Ovary (tissue), 10 donors: ENCODE measurements at regions of chr14 and their contacts with region 1.

Region 1: DNA sequence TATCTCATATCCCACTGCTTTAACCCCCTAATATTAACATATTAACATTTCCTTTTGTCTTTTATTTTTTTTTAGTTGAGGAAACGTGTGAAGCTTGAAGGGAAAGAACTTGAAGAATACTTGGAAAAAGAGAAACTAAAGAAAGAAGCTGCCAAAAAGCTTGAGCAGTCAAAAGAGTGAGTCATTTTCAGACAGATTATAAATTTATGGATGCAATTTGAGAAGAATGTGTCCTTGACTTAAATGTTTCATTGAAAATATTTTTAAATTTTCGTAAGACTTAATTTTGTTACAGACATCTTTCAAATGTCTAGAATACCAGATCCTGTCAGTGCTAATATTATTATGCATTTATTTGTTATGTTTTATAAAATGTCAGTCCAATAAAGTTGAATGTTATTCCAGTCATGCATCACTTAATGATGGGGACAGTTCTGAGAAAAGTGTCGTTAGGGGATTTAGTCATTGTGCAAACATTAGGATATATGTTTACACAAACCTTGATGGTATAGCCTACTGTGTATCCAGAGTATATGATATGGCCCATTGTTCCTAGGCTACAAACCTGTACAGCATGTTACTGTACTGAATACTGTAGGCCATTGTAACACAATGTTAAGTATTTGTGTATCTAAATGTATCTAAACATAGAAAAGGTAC is 32.6 kb downstream of the CPSF2 start:
- DNase-seq: no peak
- H3K4me3 ChIP-seq: no peak overlapping the region
- H3K27ac ChIP-seq: no peak overlapping the region
- H3K4me1 ChIP-seq: peaks cover 4% of the 10 kb centered on the region
- H3K27me3 ChIP-seq: no peaks in the 10 kb centered on the region
- CTCF ChIP-seq: no peak
- EP300 ChIP-seq: no peak
- POLR2A ChIP-seq: no peak

Region 2: GRCh38 chr14:92252323-92252722 is 97.9 kb after region 1 on chr14:
- intact Hi-C with region 1: no loop called
- DNase-seq: no peak
- H3K4me3 ChIP-seq: no peak overlapping the region
- H3K27ac ChIP-seq: no peak overlapping the region
- H3K4me1 ChIP-seq: no peaks in the 10 kb centered on the region
- H3K27me3 ChIP-seq: no peaks in the 10 kb centered on the region
- CTCF ChIP-seq: no peak
- EP300 ChIP-seq: no peak
- POLR2A ChIP-seq: no peak

Region 3: DNA sequence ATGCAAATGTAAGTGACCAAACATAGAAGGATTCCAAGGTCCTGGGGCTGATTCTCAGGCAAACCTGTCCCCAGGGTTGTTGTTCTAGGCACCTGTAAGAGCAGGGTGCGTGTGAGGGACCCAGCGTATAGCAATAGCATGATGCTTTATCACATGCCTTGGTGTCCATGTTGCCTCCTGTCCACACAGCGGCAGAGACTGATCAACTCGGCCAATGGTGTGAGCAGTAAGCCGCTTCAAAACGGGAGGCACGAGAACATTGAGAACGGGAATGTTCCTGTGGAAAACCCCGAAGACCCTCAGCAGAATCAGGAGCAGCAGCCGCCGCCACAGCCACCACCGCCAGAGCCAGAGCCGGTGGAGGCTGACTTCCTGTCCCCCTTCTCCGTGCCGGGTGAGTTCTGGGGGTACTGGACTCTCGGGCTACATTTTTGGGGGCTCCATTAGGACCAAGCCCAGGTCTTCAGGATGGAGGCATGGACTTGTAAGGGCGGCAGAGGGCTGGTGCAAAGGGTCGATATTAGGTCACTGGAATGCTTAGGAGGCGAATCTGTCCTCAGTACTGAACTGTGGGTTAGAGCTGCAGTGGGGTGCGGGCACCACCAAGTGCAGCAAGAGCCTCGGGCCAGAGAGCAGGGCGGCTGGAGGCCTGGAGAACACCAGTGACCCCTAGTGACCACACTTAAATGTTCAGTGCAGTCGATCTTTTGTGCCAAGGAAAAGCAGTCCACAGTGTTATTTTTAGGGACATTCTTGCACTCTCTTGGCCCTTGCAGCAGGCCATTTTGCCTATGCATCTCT is 302.0 kb after region 1 on chr14:
- intact Hi-C with region 1: loop called in 1 of 4 experiments (anchors 5 kb)
- DNase-seq: peak in 3 of 5 donors; percentile 28 to 56 (median 50)
- H3K4me3 ChIP-seq: no peak overlapping the region
- H3K27ac ChIP-seq: no peak overlapping the region
- H3K4me1 ChIP-seq: peaks cover 3% of the 10 kb centered on the region
- H3K27me3 ChIP-seq: no peaks in the 10 kb centered on the region
- CTCF ChIP-seq: peak in 2 of 3 donors; percentile 17 to 37
- EP300 ChIP-seq: no peak
- POLR2A ChIP-seq: no peak